ENCODE measurements at regions of chr5 and their contacts with region 1.

Region 1: DNA sequence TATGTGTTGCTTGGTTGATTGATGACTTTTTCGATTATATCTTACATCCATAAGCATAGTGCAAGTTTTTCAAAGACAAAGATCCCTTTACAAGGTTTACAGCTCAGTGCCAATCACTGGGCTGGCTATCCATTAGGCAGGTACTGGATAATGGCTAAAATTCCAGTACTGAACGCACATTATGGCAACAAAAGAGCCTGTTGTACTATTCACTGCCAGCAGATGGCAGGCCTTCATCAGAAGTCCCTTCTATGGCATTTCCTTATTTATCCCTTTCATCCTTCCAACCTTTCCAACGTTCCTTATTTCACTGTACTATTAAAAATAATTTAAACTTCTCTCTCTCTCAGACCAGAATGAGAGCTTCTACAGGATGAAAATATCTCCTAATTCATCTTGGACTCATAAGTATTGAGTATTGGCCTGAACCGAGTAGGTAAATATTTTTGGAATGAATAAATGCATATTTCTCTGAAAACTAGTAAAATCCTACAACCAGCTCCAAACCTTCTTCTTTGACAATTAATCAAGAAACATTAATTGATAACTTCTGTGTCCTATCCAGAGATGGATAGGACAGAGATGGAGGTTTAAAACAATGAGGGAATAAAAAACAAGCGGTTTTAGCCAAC is 6.7 kb upstream of the WNT8A start:
- DNase-seq: peak in 2 of 3 donors; percentile 31 to 89
- ATAC-seq: peak; percentile 84
- H3K4me3 ChIP-seq: no peak overlapping the region
- H3K4me1 ChIP-seq: no peaks in the 10 kb centered on the region
- CTCF ChIP-seq: peak; percentile 58

Region 2: GRCh38 chr5:137914758-137915157 is 162.4 kb before region 1 on chr5:
- intact Hi-C with region 1: no loop called
- DNase-seq: no peak
- ATAC-seq: no peak
- H3K4me3 ChIP-seq: no peak overlapping the region
- H3K4me1 ChIP-seq: no peaks in the 10 kb centered on the region
- CTCF ChIP-seq: no peak

Region 3: GRCh38 chr5:138132543-138132942 is 55.4 kb after region 1 on chr5:
- intact Hi-C with region 1: loop called (anchors 2 to 5 kb)
- DNase-seq: no peak
- ATAC-seq: no peak
- H3K4me3 ChIP-seq: no peak overlapping the region
- H3K4me1 ChIP-seq: no peaks in the 10 kb centered on the region
- CTCF ChIP-seq: no peak

Region 4: DNA sequence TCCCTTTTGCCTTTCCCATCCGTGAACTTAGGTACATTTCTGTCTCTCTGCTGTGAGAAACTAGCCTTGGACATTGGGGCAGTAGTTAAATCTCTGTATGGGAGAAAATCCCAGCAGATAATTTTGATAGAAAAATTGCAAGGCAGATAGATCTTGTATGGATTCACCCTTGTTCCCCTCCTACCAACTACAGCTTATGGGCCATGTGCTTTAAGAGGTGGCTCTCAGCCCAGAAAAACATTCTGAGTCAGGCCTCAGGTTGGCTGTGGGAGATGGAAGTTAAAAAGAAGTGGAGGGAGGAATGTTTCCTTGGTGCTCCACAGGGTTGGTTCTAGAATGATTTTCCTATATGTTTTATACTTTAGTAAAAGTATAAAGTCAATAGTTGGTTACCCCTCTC is 273.9 kb after region 1 on chr5:
- intact Hi-C with region 1: no loop called
- DNase-seq: no peak
- ATAC-seq: no peak
- H3K4me3 ChIP-seq: no peak overlapping the region
- H3K4me1 ChIP-seq: peaks cover 17% of the 10 kb centered on the region
- CTCF ChIP-seq: no peak